H1 (cell line): ENCODE measurements at regions of chr11 and their contacts with region 1.

Region 1: GRCh38 chr11:102760355-102761035 is 19.9 kb downstream of the MMP10 start:
- DNase-seq: no peak
- H3K4me3 ChIP-seq: no peak overlapping the region
- H3K27ac ChIP-seq: no peak overlapping the region
- H3K4me1 ChIP-seq: peaks cover 0 to 4% (median 1%) of the 10 kb centered on the region in 4 experiments; a peak in 1 of 7 replicates
- H3K27me3 ChIP-seq: peaks cover 0 to under 1% (median 0%) of the 10 kb centered on the region in 4 experiments; a peak in 1 of 7 replicates
- CTCF ChIP-seq: no peak
- EP300 ChIP-seq: no peak
- POLR2A ChIP-seq: no peak
- RAD21 ChIP-seq: no peak

Region 2: GRCh38 chr11:102716527-102716926 is 44.0 kb before region 1 on chr11:
- CTCF ChIA-PET with region 1: no interaction called
- POLR2A ChIA-PET with region 1: no interaction called
- DNase-seq: no peak
- H3K4me3 ChIP-seq: no peak overlapping the region
- H3K27ac ChIP-seq: no peak overlapping the region
- H3K4me1 ChIP-seq: no peaks in the 10 kb centered on the region
- H3K27me3 ChIP-seq: no peaks in the 10 kb centered on the region
- CTCF ChIP-seq: no peak
- EP300 ChIP-seq: no peak
- POLR2A ChIP-seq: no peak
- RAD21 ChIP-seq: no peak

Region 3: GRCh38 chr11:102780491-102780918 is 20.0 kb after region 1 on chr11 and contains the start of gene MMP10:
- CTCF ChIA-PET with region 1: interaction called, 22 read pairs
- POLR2A ChIA-PET with region 1: no interaction called
- DNase-seq: peak in 1 of 2 experiments; percentile 27
- H3K4me3 ChIP-seq: no peak within 1 kb of the TSS
- H3K27ac ChIP-seq: no peak within 1 kb of the TSS
- H3K4me1 ChIP-seq: peaks cover 0 to 3% (median under 1%) of the 10 kb centered on the region in 4 experiments; a peak in 2 of 7 replicates
- H3K27me3 ChIP-seq: no peaks in the 10 kb centered on the region
- CTCF ChIP-seq: peak in 2 of 3 experiments; percentile 11 to 62; a peak in 2 of 4 replicates
- EP300 ChIP-seq: no peak
- POLR2A ChIP-seq: no peak
- RAD21 ChIP-seq: peak in 1 of 2 experiments; percentile 34; a peak in 1 of 4 replicates
- total RNA-seq, gene MMP10: 0.17 TPM in 1 of 2 replicates, not detected in the other